CD8-positive, alpha-beta memory T cell (primary cell): ENCODE measurements at regions of chr15 and their contacts with region 1.

Region 1: DNA sequence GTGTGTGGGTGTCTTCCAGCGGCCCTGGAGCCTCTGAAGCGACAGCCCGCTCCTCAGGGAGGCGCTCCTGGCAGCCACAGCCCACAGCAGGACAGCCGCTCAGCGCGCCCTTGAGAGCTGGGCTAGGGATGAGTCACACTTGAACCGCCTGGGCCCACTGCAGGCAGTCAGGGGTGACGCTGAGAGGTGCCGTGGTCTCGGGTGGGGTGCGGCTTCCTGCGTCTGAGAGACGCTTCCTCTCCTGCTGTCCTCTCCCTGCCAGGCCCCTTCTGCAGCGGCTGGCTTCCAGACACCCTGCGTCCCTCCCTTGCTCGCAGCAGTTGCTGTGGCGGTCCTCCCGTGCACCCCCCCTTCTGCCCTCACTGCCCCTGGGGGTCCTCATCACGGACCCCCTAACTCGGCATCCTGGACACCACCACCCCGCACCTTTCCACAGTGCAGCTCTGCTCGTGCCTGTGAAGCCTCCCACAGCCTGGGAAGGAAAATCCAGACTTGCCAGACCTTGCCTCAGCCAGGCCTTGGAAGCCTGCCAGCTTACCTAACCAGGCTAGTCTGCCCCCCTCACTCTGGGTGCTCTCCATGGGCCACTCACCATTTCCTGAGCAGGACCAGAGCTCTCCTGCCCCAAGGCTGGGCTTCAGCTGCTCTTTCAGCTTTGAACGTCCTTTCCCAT is 1.1 kb upstream of the SPTBN5 start:
- DNase-seq: peak; percentile 86 to 96 (median 88)
- H3K4me3 ChIP-seq: peak overlapping the region; percentile 29
- H3K4me3 Mint-ChIP-seq: peak overlapping the region; percentile 73 to 93 (median 84)
- H3K27ac ChIP-seq: peak overlapping the region; percentile 76
- H3K27ac Mint-ChIP-seq: peak overlapping the region; percentile 99 to 100 (median 100)
- H3K4me1 ChIP-seq: peaks cover 38% of the 10 kb centered on the region
- H3K4me1 Mint-ChIP-seq: peaks cover 29 to 59% (median 35%) of the 10 kb centered on the region in 3 donors
- H3K27me3 ChIP-seq: no peaks in the 10 kb centered on the region
- H3K27me3 Mint-ChIP-seq: peaks cover 0 to 1% of the 10 kb centered on the region in 2 donors

Region 2: GRCh38 chr15:41544650-41545015 is 350.3 kb before region 1 on chr15:
- CTCF ChIA-PET with region 1: no interaction called
- POLR2A ChIA-PET with region 1: interaction called, 12 read pairs
- DNase-seq: peak in 4 of 5 donors; percentile 21 to 56 (median 48)
- H3K4me3 ChIP-seq: peak overlapping the region; percentile 97
- H3K4me3 Mint-ChIP-seq: peak overlapping the region; percentile 87 to 97 (median 96)
- H3K27ac ChIP-seq: peak overlapping the region; percentile 73
- H3K27ac Mint-ChIP-seq: peak overlapping the region; percentile 86 to 98 (median 95)
- H3K4me1 ChIP-seq: peaks cover 9% of the 10 kb centered on the region
- H3K4me1 Mint-ChIP-seq: peaks cover 17 to 26% (median 24%) of the 10 kb centered on the region in 3 donors
- H3K27me3 ChIP-seq: no peaks in the 10 kb centered on the region
- H3K27me3 Mint-ChIP-seq: peaks cover 0 to 2% of the 10 kb centered on the region in 2 donors

Region 3: GRCh38 chr15:41936649-41937567 is 42.0 kb after region 1 on chr15:
- CTCF ChIA-PET with region 1: interaction called, 11 read pairs
- POLR2A ChIA-PET with region 1: interaction called, 9 read pairs
- DNase-seq: peak; percentile 74 to 90 (median 78)
- H3K4me3 ChIP-seq: peak overlapping the region; percentile 12
- H3K4me3 Mint-ChIP-seq: peak overlapping the region; percentile 31 to 91 (median 77)
- H3K27ac ChIP-seq: peak overlapping the region; percentile 88
- H3K27ac Mint-ChIP-seq: peak overlapping the region; percentile 94 to 100 (median 100)
- H3K4me1 ChIP-seq: peaks cover 61% of the 10 kb centered on the region
- H3K4me1 Mint-ChIP-seq: peaks cover 57 to 66% (median 66%) of the 10 kb centered on the region in 3 donors
- H3K27me3 ChIP-seq: no peaks in the 10 kb centered on the region
- H3K27me3 Mint-ChIP-seq: no peaks in the 10 kb centered on the region

Region 4: GRCh38 chr15:41972253-41973242 is 77.6 kb after region 1 on chr15 and contains the start of gene EHD4:
- CTCF ChIA-PET with region 1: no interaction called
- POLR2A ChIA-PET with region 1: interaction called, 11 read pairs
- DNase-seq: peak; percentile 88 to 98 (median 94)
- H3K4me3 ChIP-seq: peak within 1 kb of the TSS; percentile 90
- H3K4me3 Mint-ChIP-seq: peak within 1 kb of the TSS; percentile 94 to 97 (median 95)
- H3K27ac ChIP-seq: peak within 1 kb of the TSS; percentile 91
- H3K27ac Mint-ChIP-seq: peak within 1 kb of the TSS; percentile 82 to 99 (median 97)
- H3K4me1 ChIP-seq: peaks cover 31% of the 10 kb centered on the region
- H3K4me1 Mint-ChIP-seq: peaks cover 42 to 50% (median 45%) of the 10 kb centered on the region in 3 donors
- H3K27me3 ChIP-seq: no peaks in the 10 kb centered on the region
- H3K27me3 Mint-ChIP-seq: peaks cover 10 to 24% of the 10 kb centered on the region in 2 donors
- total RNA-seq, gene EHD4: 24.2 to 26.4 TPM